CD8-positive, alpha-beta T cell (primary cell): ENCODE measurements at regions of chr1 and their contacts with region 1.

Region 1: GRCh38 chr1:45490626-45491486 is at the start of gene TESK2:
- DNase-seq: peak; percentile 94 to 100 (median 95)
- ATAC-seq: peak; percentile 91
- H3K4me3 ChIP-seq: peak within 1 kb of the TSS; percentile 74 to 91
- H3K4me3 Mint-ChIP-seq: no peak within 1 kb of the TSS
- H3K27ac ChIP-seq: peak within 1 kb of the TSS; percentile 49 to 72
- H3K27ac Mint-ChIP-seq: no peak within 1 kb of the TSS
- H3K4me1 ChIP-seq: peaks cover 11% of the 10 kb centered on the region
- H3K4me1 Mint-ChIP-seq: peaks cover 16% of the 10 kb centered on the region
- H3K27me3 ChIP-seq: peaks cover 0 to 3% of the 10 kb centered on the region in 2 experiments
- H3K27me3 Mint-ChIP-seq: no peaks in the 10 kb centered on the region
- CTCF ChIP-seq: no peak
- total RNA-seq, gene TESK2: 4.6 to 5.8 TPM

Region 2: DNA sequence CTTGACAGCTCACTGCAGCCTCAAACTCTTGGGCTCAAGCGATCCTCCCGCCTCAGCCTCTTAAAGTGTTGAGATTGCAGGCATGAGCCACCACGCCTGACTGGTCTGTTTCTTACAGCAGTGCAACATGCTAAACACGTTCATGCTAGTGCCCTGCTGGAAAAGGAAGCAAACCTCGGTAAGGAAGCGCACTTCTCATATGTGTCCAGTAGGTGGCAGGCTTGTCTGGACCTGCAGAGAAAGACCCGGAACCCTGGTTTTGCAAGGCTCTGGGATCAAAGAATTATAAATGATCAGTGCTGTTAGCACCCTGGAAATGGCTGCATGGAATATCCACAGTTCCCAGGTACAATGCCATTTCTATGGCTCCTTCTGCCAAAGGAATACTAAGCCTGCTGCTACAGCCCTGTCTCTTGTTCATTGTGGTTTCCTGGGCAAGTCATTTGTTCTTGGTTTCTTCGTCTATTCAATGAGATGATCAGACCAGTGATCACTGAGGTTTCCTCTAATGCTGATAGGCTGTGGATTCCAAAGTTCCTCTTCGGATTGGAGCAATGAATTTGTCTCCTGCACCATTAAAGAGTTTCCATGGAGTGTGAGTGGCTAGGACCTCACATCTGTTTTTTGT is 775.8 kb before region 1 on chr1:
- CTCF ChIA-PET with region 1: no interaction called
- POLR2A ChIA-PET with region 1: no interaction called
- intact Hi-C with region 1: loop called in 1 of 2 experiments (anchors 5 kb)
- DNase-seq: peak; percentile 37 to 87 (median 63)
- ATAC-seq: peak; percentile 94
- H3K4me3 ChIP-seq: peak overlapping the region in 1 of 2 experiments; percentile 1
- H3K4me3 Mint-ChIP-seq: peak overlapping the region; percentile 64
- H3K27ac ChIP-seq: no peak overlapping the region
- H3K27ac Mint-ChIP-seq: peak overlapping the region; percentile 37
- H3K4me1 ChIP-seq: peaks cover 44% of the 10 kb centered on the region
- H3K4me1 Mint-ChIP-seq: peaks cover 44% of the 10 kb centered on the region
- H3K27me3 ChIP-seq: no peaks in the 10 kb centered on the region
- H3K27me3 Mint-ChIP-seq: no peaks in the 10 kb centered on the region
- CTCF ChIP-seq: peak; percentile 96

Region 3: DNA sequence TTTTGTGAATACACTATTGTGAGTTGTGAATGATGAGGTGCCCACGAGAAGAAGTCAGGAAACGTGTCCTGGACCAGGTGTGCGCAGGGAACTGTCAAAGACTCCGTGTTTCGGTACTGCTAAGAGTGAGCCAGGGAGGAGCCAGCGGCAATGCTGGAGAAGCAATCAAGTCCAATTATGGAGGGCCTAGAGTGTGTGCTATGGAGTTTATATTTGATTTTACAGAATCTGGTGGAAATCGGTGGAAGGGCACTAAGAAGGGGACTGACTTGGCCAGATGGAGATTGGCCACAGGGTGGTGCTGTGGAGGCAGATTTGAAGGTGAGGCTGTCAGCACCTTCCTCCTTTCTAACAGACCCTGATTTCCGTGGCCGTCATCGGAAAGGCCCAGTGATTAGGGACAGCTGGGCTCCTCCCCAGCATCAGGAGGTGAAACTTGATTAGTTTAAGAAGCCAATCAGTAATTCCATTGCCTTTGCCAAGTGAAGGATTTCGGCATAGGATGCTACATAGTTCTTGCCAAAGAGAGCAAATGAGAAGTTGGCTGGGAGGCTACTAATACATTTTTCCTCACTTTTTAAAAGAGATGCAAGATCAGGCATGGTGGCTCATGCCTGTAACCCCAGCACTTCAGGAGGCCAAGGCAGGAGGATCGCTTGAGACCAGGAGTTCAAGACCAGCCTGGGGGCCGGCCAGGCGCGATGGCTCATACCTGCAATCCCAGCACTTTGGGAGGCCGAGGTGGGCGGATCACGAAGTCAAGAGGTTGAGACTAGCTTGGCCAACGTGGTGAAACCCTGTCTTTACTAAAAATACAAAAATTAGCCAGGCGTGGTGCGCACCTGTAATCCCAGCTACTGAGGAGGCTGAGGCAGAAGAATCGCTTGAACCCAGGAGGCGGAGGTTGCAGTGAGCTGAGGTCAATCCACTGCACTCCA is 654.8 kb before region 1 on chr1:
- CTCF ChIA-PET with region 1: no interaction called
- POLR2A ChIA-PET with region 1: no interaction called
- intact Hi-C with region 1: loop called in 1 of 2 experiments (anchors 5 kb)
- DNase-seq: peak; percentile 68 to 91 (median 85)
- ATAC-seq: peak; percentile 98
- H3K4me3 ChIP-seq: no peak overlapping the region
- H3K4me3 Mint-ChIP-seq: peak overlapping the region; percentile 16
- H3K27ac ChIP-seq: no peak overlapping the region
- H3K27ac Mint-ChIP-seq: no peak overlapping the region
- H3K4me1 ChIP-seq: no peaks in the 10 kb centered on the region
- H3K4me1 Mint-ChIP-seq: peaks cover 9% of the 10 kb centered on the region
- H3K27me3 ChIP-seq: no peaks in the 10 kb centered on the region
- H3K27me3 Mint-ChIP-seq: peaks cover 4% of the 10 kb centered on the region
- CTCF ChIP-seq: peak; percentile 73

Region 4: GRCh38 chr1:45205910-45206721 is 284.7 kb before region 1 on chr1 and contains the start of gene ZSWIM5:
- CTCF ChIA-PET with region 1: no interaction called
- POLR2A ChIA-PET with region 1: no interaction called
- intact Hi-C with region 1: loop called in 1 of 2 experiments (anchors 5 kb)
- DNase-seq: peak; percentile 34 to 84 (median 61)
- ATAC-seq: peak; percentile 77
- H3K4me3 ChIP-seq: peak within 1 kb of the TSS; percentile 62 to 80
- H3K4me3 Mint-ChIP-seq: peak within 1 kb of the TSS; percentile 92
- H3K27ac ChIP-seq: peak within 1 kb of the TSS; percentile 34 to 37
- H3K27ac Mint-ChIP-seq: peak within 1 kb of the TSS; percentile 80
- H3K4me1 ChIP-seq: peaks cover 32% of the 10 kb centered on the region
- H3K4me1 Mint-ChIP-seq: peaks cover 33% of the 10 kb centered on the region
- H3K27me3 ChIP-seq: no peaks in the 10 kb centered on the region
- H3K27me3 Mint-ChIP-seq: peaks cover 8% of the 10 kb centered on the region
- CTCF ChIP-seq: no peak
- total RNA-seq, gene ZSWIM5: 1.0 to 1.8 TPM

Region 5: DNA sequence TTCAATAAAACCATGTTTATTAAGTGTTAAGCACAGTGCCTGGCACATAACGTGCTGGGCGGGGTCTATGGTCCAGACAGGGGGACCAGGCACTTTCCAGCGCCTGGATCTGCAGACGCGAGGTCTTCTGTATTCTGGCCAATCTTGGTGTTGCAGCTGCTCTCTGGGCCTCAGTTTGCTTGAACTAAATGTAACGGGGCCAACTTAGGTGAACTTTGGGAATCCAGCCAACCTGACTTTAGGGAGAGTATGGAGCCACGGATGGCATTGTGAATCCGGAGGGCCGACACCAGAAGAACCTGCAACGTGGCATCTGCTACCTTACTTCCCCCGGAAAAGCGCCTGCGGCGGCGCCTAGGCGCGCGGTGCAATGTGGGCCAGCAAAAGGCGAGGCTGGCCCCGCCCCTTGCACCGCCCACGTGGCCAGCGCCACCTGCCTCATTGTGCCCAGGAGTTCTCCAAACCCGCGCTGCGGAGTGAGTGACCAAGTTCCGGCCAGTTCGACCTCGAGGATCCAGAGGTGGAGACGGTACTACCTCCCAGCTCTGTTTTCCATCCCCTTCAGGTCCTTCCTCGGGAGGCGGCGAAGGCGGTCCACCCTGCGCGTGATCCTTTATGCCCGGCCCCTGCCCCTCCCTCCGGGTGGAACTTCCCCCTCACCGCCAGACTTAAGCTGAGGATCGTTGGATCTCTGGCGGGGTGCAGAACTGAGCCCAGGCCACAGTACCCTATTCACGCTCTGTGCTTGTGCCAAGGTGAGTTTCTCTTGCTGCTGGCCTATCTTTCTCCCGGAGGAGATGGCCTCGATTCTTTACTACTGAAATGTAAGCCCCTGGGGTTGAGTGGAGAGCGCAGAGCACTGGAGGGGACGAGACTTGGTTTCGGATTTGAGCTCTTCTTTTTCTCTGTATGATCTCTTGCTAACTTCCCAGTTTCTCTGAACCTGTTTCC is 59.8 kb after region 1 on chr1 and contains the start of gene AKR1A1:
- CTCF ChIA-PET with region 1: interaction called, 3 read pairs
- POLR2A ChIA-PET with region 1: no interaction called
- intact Hi-C with region 1: loop called in 1 of 2 experiments (anchors 2 kb)
- DNase-seq: peak; percentile 71 to 93 (median 83)
- ATAC-seq: peak; percentile 94
- H3K4me3 ChIP-seq: peak within 1 kb of the TSS; percentile 85 to 96
- H3K4me3 Mint-ChIP-seq: peak within 1 kb of the TSS; percentile 95
- H3K27ac ChIP-seq: peak within 1 kb of the TSS; percentile 76 to 91
- H3K27ac Mint-ChIP-seq: peak within 1 kb of the TSS; percentile 93
- H3K4me1 ChIP-seq: peaks cover 16% of the 10 kb centered on the region
- H3K4me1 Mint-ChIP-seq: peaks cover 23% of the 10 kb centered on the region
- H3K27me3 ChIP-seq: no peaks in the 10 kb centered on the region
- H3K27me3 Mint-ChIP-seq: no peaks in the 10 kb centered on the region
- CTCF ChIP-seq: no peak
- total RNA-seq, gene AKR1A1: 27.2 to 31.9 TPM

Region 6: DNA sequence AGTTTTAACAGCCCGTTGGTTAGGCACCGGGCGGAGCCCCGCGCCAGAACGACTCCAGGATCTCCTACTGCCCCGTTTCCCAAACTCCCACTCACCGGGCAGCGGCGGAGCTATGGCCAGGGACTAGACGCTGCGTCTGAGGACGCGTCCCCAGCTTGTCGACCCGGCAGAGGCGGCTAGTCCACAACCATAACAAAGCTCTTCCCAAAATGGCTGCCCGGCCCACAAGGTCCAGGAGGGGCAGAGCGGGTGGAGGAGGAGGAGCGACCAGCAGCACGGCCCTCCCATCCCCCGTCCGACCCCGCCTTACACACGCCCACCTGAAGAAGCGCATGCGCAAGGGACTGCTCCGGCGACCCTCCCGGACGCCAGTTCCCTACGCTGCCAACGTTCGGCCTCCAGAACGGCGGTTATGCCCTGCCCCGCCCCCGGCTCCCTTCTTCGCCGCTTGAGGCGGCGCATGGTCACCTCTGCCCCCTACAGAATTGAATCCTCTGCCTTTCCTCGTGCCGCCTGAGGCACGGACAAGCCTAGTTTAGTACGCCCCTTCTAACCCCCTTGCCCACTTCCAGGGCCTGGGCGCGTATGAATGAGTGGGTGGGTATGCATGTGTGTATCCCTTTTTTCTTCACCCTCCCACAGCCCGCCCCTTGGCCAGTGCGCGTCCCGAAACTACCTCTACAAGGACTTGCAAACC is 195.6 kb after region 1 on chr1 and contains the start of gene GPBP1L1:
- CTCF ChIA-PET with region 1: no interaction called
- POLR2A ChIA-PET with region 1: no interaction called
- intact Hi-C with region 1: loop called (anchors 1 to 2 kb)
- DNase-seq: peak; percentile 95 to 98 (median 98)
- ATAC-seq: peak; percentile 72
- H3K4me3 ChIP-seq: peak within 1 kb of the TSS; percentile 99
- H3K4me3 Mint-ChIP-seq: peak within 1 kb of the TSS; percentile 97
- H3K27ac ChIP-seq: peak within 1 kb of the TSS; percentile 84 to 92
- H3K27ac Mint-ChIP-seq: peak within 1 kb of the TSS; percentile 100
- H3K4me1 ChIP-seq: peaks cover 39% of the 10 kb centered on the region
- H3K4me1 Mint-ChIP-seq: peaks cover 59% of the 10 kb centered on the region
- H3K27me3 ChIP-seq: no peaks in the 10 kb centered on the region
- H3K27me3 Mint-ChIP-seq: no peaks in the 10 kb centered on the region
- CTCF ChIP-seq: no peak
- total RNA-seq, gene GPBP1L1: 125 to 128 TPM